ENCODE measurements at regions of chr7 and their contacts with region 1.

Region 1: GRCh38 chr7:18196638-18197037 is 169.0 kb upstream of the PRPS1L1 start:
- DNase-seq: no peak
- H3K4me3 ChIP-seq: no peak overlapping the region
- H3K27ac ChIP-seq: no peak overlapping the region
- H3K4me1 ChIP-seq: peaks cover 3% of the 10 kb centered on the region
- H3K27me3 ChIP-seq: no peaks in the 10 kb centered on the region
- CTCF ChIP-seq: no peak
- POLR2A ChIP-seq: no peak

Region 2: GRCh38 chr7:18221377-18222293 is 25.0 kb after region 1 on chr7:
- intact Hi-C with region 1: loop called (anchors 1 kb)
- DNase-seq: no peak
- H3K4me3 ChIP-seq: no peak overlapping the region
- H3K27ac ChIP-seq: no peak overlapping the region
- H3K4me1 ChIP-seq: no peaks in the 10 kb centered on the region
- H3K27me3 ChIP-seq: no peaks in the 10 kb centered on the region
- CTCF ChIP-seq: no peak
- POLR2A ChIP-seq: no peak

Region 3: GRCh38 chr7:18257711-18258110 is 61.1 kb after region 1 on chr7:
- intact Hi-C with region 1: no loop called
- DNase-seq: no peak
- H3K4me3 ChIP-seq: no peak overlapping the region
- H3K27ac ChIP-seq: no peak overlapping the region
- H3K4me1 ChIP-seq: no peaks in the 10 kb centered on the region
- H3K27me3 ChIP-seq: no peaks in the 10 kb centered on the region
- CTCF ChIP-seq: no peak
- POLR2A ChIP-seq: no peak

Measured in vagina (tissue), 2 donors.